Brain microvascular endothelial cell (primary cell): ENCODE measurements at regions of chr10 and their contacts with region 1.

Region 1: DNA sequence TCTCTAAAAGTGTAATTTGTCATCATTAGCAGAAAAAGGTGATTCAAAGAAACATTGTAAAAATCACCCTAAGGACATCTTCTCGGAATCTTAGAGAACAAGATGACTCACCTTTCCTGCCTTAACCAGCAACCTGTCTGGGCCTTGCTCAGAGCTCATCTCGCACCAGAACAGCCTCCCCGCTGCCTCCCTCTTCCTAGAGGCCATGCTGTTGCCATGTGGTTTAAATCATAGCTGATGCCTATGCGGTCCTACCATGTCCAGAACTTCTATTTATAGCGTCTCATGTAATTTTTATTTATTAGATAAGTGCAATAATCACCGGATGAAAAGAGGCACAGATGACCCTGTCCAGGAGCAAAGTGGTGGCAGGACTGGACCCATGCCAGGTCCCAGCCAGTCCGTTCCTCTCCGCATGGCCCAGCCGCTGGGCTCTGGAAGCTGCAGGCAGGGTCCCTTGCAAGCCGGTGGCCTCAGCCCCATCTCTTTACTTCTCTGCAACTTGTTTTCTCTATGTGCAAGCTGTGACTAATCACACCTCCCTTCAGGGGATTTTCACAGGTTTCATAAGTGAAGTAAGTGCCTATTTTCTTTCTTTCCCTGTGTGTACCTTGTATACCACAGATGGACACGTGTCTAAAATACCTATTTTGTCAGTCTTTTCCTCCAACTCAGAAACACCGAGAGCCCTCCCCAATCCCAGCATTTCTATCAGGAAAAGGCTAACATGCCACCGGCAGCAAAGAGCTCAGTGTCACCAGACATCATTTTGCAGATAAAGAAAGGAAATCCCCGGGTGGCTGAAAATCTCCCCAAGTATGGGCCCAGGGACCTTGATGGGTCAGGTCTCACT is 27.1 kb downstream of the KLF6 start:
- DNase-seq: no peak
- H3K4me3 ChIP-seq: no peak overlapping the region
- H3K27ac ChIP-seq: no peak overlapping the region
- H3K27me3 ChIP-seq: no peaks in the 10 kb centered on the region
- CTCF ChIP-seq: no peak

Region 2: GRCh38 chr10:3239066-3239919 is 518.6 kb before region 1 on chr10:
- in situ Hi-C with region 1: loop called (anchors 25 kb)
- DNase-seq: peak; percentile 44
- H3K4me3 ChIP-seq: no peak overlapping the region
- H3K27ac ChIP-seq: no peak overlapping the region
- H3K27me3 ChIP-seq: no peaks in the 10 kb centered on the region
- CTCF ChIP-seq: peak; percentile 94

Region 3: GRCh38 chr10:3467052-3467951 is 290.6 kb before region 1 on chr10:
- in situ Hi-C with region 1: loop called (anchors 25 kb)
- DNase-seq: peak; percentile 94
- H3K4me3 ChIP-seq: peak overlapping the region; percentile 39
- H3K27ac ChIP-seq: peak overlapping the region; percentile 95
- H3K27me3 ChIP-seq: no peaks in the 10 kb centered on the region
- CTCF ChIP-seq: peak; percentile 80